IMR-90 (cell line): ENCODE measurements at regions of chr1 and their contacts with region 1.

Region 1: GRCh38 chr1:207404849-207405525 is 49.1 kb upstream of the CR2 start:
- DNase-seq: peak; percentile 78
- ATAC-seq: peak; percentile 94
- H3K4me3 ChIP-seq: no peak overlapping the region
- H3K27ac ChIP-seq: no peak overlapping the region
- H3K4me1 ChIP-seq: no peaks in the 10 kb centered on the region
- H3K27me3 ChIP-seq: peaks cover 4% of the 10 kb centered on the region
- CTCF ChIP-seq: peak; percentile 86
- POLR2A ChIP-seq: peak; percentile 36; the same call in 1 of the 2 replicates
- RAD21 ChIP-seq: peak; percentile 86

Region 2: GRCh38 chr1:207084701-207085180 is 320.2 kb before region 1 on chr1:
- CTCF ChIA-PET with region 1: interaction called, 13 read pairs
- POLR2A ChIA-PET with region 1: no interaction called
- dilution Hi-C with region 1: no loop called
- in situ Hi-C with region 1: no loop called
- intact Hi-C with region 1: loop called (anchors 1 kb)
- DNase-seq: peak; percentile 61
- ATAC-seq: peak; percentile 80
- H3K4me3 ChIP-seq: no peak overlapping the region
- H3K27ac ChIP-seq: no peak overlapping the region
- H3K4me1 ChIP-seq: no peaks in the 10 kb centered on the region
- H3K27me3 ChIP-seq: peaks cover 14% of the 10 kb centered on the region
- CTCF ChIP-seq: peak; percentile 54
- POLR2A ChIP-seq: no peak
- RAD21 ChIP-seq: peak; percentile 57

Region 3: DNA sequence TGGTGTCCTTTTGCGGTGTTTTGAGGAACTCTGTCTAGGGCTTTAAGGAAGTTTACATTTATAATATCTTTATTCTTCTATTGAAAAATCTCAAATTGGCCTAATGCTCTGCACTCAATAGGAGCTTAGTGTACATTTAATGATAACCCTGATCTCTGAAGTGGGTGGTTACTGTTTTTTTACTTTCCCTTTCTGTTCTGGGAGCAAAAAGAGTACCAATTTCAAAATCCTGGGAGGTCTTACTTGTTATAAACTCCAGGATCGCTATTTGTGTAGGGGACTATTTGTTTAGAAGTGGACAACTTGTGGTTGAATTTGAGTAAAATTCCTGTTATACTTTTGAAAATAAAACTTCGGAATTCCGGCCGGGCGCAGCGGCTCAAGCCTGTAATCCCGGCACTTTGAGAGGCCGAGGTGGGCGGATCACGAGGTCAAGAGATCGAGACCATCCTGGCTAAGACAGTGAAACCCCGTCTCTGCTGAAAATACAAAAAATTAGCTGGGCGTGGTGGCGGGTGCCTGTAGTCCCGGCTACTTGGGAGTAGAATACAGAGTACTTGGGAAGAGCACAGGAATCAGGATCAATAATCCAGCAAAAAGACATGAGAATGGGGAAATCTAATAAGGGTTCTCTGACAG is 315.2 kb before region 1 on chr1:
- CTCF ChIA-PET with region 1: interaction called, 13 read pairs
- POLR2A ChIA-PET with region 1: no interaction called
- dilution Hi-C with region 1: no loop called
- in situ Hi-C with region 1: loop called (anchors 5 kb)
- intact Hi-C with region 1: loop called (anchors 1 kb)
- DNase-seq: no peak
- ATAC-seq: no peak
- H3K4me3 ChIP-seq: no peak overlapping the region
- H3K27ac ChIP-seq: no peak overlapping the region
- H3K4me1 ChIP-seq: no peaks in the 10 kb centered on the region
- H3K27me3 ChIP-seq: peaks cover 6% of the 10 kb centered on the region; the same call in 1 of the 2 replicates
- CTCF ChIP-seq: no peak
- POLR2A ChIP-seq: no peak
- RAD21 ChIP-seq: no peak

Region 4: DNA sequence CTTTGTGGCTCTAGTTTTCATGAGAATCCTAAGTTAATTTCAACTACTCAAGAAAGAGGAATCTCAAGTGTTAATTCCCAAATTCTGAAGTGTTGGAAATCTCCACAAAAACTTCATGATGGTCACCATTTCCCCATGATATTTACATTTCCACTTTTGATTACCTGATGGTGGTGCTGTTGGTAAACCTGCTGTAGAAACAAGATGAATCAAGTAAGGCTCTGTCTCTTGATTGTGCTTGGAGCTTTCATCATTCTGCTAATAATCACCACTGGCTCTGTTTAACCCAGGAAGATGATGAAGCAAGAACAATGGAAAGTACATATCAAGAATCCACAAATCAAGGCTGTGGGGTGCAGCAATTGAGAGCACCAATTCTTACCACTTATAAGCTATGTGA is 223.1 kb before region 1 on chr1:
- CTCF ChIA-PET with region 1: no interaction called
- POLR2A ChIA-PET with region 1: no interaction called
- dilution Hi-C with region 1: no loop called
- in situ Hi-C with region 1: no loop called
- intact Hi-C with region 1: loop called (anchors 5 kb)
- DNase-seq: no peak
- ATAC-seq: no peak
- H3K4me3 ChIP-seq: no peak overlapping the region
- H3K27ac ChIP-seq: no peak overlapping the region
- H3K4me1 ChIP-seq: no peaks in the 10 kb centered on the region
- H3K27me3 ChIP-seq: no peaks in the 10 kb centered on the region
- CTCF ChIP-seq: 0 out of 2 replicates have a peak, but pooled peaks have one; percentile 13
- POLR2A ChIP-seq: no peak
- RAD21 ChIP-seq: peak; percentile 13; the same call in 1 of the 2 replicates

Region 5: DNA sequence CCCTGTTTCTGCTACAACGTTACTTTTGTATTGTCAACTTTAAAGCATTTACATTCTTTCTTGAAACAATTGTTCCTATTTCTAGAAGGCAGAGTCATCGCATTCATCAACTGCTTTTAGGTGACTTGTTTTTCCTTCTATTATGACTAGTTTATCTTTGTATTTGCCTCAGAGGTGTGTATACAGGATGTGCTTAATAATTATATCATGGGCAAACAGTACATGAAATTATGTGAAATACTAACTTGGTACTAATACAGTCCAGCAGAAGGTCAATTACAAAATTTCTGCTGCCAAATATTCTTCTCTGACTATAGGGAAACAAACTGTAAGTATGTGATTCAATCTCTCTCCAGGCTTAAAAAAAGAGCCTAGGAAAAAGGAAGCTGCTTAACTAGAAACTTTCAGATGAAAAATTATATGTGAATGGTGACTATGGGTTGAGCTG is 199.3 kb before region 1 on chr1:
- CTCF ChIA-PET with region 1: no interaction called
- POLR2A ChIA-PET with region 1: no interaction called
- dilution Hi-C with region 1: no loop called
- in situ Hi-C with region 1: no loop called
- intact Hi-C with region 1: no loop called
- DNase-seq: no peak
- ATAC-seq: no peak
- H3K4me3 ChIP-seq: no peak overlapping the region
- H3K27ac ChIP-seq: no peak overlapping the region
- H3K4me1 ChIP-seq: no peaks in the 10 kb centered on the region
- H3K27me3 ChIP-seq: no peaks in the 10 kb centered on the region
- CTCF ChIP-seq: no peak
- POLR2A ChIP-seq: no peak
- RAD21 ChIP-seq: no peak

Region 6: DNA sequence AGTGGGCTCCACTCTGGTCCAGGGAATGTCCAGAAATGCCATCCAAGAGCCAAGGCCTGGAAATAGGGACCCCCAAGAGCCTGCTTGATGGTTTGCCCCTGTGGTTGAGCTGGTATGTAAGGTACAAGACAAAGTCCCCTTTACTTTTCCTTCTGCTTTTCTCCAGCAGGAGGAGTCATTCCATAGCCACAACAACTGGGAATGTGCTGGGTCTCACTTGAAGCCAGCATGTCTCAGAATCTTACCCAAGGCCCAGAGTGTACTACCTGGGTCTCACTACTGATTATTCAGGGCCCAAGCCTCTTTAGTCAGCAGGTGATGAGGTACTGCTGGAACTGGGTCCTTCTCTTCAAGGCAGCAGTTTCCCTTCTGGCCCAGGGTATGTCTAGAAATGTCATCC is 145.6 kb before region 1 on chr1:
- CTCF ChIA-PET with region 1: interaction called, 10 read pairs
- POLR2A ChIA-PET with region 1: no interaction called
- dilution Hi-C with region 1: no loop called
- in situ Hi-C with region 1: no loop called
- intact Hi-C with region 1: loop called (anchors 1 kb)
- DNase-seq: peak; percentile 19
- ATAC-seq: peak; percentile 35; the same call in 1 of the 2 replicates
- H3K4me3 ChIP-seq: no peak overlapping the region
- H3K27ac ChIP-seq: no peak overlapping the region
- H3K4me1 ChIP-seq: no peaks in the 10 kb centered on the region; the same call in 1 of the 2 replicates
- H3K27me3 ChIP-seq: no peaks in the 10 kb centered on the region
- CTCF ChIP-seq: peak; percentile 45
- POLR2A ChIP-seq: no peak
- RAD21 ChIP-seq: peak; percentile 46

Region 7: GRCh38 chr1:207499573-207499972 is 94.6 kb after region 1 on chr1:
- CTCF ChIA-PET with region 1: no interaction called
- POLR2A ChIA-PET with region 1: no interaction called
- dilution Hi-C with region 1: no loop called
- in situ Hi-C with region 1: no loop called
- intact Hi-C with region 1: loop called (anchors 1 kb)
- DNase-seq: peak; percentile 59
- ATAC-seq: peak; percentile 93
- H3K4me3 ChIP-seq: no peak overlapping the region
- H3K27ac ChIP-seq: no peak overlapping the region
- H3K4me1 ChIP-seq: no peaks in the 10 kb centered on the region
- H3K27me3 ChIP-seq: peaks cover 24% of the 10 kb centered on the region
- CTCF ChIP-seq: peak; percentile 74
- POLR2A ChIP-seq: no peak
- RAD21 ChIP-seq: peak; percentile 81